Activated CD4-positive, alpha-beta T cell treated with anti-CD3 and anti-CD28 coated beads, Interleukin-2, amount 10 ng/mL, durations not matched to agents 24 days and 14 days (primary cell): ENCODE measurements at regions of chr6 and their contacts with region 1.

Region 1: DNA sequence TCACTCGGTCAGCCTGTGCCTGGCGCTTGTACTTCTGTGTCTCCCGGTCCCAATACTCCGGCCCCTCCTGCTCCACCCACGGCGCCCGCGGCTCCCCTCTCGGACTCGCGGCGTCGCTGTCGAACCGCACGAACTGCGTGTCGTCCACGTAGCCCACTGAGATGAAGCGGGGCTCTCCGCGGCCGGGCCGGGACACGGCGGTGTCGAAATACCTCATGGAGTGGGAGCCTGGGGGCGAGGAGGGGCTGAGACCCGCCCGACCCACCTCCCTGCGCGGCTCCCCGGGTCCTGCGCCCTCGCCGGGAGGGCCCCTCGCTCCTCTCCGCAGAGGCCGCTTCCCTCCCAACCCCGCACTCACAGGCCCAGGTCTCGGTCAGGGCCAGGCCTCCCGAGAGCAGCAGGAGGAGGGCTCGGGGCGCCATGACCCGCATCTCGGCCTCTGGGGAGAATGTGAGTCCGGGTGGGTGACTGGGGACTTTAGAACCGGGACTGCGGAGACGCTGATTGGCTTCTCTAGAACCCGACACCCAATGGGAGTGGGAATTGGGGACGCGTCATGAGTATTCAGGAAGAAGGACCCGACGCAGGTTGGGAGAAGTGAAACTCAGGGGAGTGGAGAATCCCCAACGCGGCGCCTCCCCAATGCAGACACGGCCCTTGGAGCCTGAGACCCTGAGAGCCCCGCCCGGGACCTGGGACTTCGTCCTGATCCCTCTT is at the start of gene HLA-C:
- DNase-seq: peak; percentile 97
- H3K4me3 Mint-ChIP-seq: peak within 1 kb of the TSS; percentile 98
- H3K27ac Mint-ChIP-seq: peak within 1 kb of the TSS; percentile 100
- H3K4me1 Mint-ChIP-seq: peaks cover 51% of the 10 kb centered on the region
- H3K27me3 Mint-ChIP-seq: peaks cover 9% of the 10 kb centered on the region
- total RNA-seq, gene HLA-C: 857 and 893 TPM in 2 replicates

Region 2: DNA sequence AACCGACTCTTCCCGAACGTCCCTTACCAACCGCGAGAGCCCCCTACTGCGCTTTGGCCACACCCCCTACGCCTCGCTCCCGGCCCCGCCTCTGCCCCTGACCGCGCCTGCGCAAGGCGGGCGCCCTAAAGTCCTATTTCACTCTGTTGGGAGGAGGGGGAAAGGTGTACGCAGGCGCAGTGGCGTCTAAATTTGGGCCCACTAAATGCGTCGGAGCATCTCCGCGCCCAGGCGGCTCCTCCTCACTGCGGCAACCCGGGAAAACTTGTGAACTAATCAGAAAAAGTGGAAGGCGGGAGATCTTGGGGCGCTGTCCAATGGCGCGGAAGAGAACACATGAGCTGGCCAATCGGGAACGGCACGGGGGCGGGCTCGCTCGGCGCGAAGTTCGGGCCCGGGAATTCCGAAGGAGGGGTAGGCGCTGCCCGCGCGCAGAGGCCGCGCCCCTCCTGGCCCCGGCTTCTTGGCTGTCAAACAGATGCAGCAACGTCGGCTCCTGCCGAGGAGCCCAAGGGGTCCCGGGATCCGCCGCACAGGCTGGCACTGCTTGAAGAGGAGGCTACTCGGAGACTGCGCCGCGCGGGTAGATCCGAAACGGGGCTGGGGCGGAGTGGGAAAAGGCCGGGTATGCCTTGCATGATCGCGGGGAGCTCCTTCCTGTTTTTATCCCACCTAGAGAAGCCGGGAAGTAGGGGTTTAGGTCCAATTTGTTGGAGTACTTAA is 113.5 kb before region 1 on chr6 and contains the start of gene TCF19:
- intact Hi-C with region 1: loop called (anchors 2 kb)
- DNase-seq: peak; percentile 100
- H3K4me3 Mint-ChIP-seq: peak within 1 kb of the TSS; percentile 97
- H3K27ac Mint-ChIP-seq: peak within 1 kb of the TSS; percentile 89
- H3K4me1 Mint-ChIP-seq: peaks cover 41% of the 10 kb centered on the region
- H3K27me3 Mint-ChIP-seq: peaks cover 3% of the 10 kb centered on the region
- total RNA-seq, gene TCF19: 79.5 and 82.6 TPM in 2 replicates

Region 3: DNA sequence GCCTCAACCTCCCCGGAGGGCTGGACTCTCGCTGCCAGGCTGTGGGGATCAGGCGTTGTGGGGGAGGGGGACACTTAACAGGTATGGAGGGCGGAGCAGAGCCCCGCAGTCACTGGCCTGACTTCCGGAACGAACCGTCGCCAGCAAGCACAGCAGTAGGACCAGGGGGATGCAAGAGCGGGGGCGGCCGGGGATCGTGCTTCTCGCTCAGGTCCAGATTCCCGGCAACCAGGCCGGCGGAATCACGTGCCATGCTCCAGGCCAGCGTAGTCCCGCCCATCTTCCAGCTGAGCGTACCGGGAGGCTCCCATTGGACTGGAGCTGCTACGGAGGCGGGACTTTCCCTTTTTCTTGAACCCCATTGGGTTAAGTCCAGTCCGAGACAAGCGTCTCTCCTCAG is 91.3 kb before region 1 on chr6:
- intact Hi-C with region 1: no loop called
- DNase-seq: peak; percentile 81
- H3K4me3 Mint-ChIP-seq: peak overlapping the region; percentile 69
- H3K27ac Mint-ChIP-seq: no peak overlapping the region
- H3K4me1 Mint-ChIP-seq: peaks cover 13% of the 10 kb centered on the region
- H3K27me3 Mint-ChIP-seq: no peaks in the 10 kb centered on the region

Region 4: GRCh38 chr6:31203345-31203979 is 68.3 kb before region 1 on chr6:
- intact Hi-C with region 1: loop called (anchors 1 kb)
- DNase-seq: peak; percentile 86
- H3K4me3 Mint-ChIP-seq: peak overlapping the region; percentile 93
- H3K27ac Mint-ChIP-seq: peak overlapping the region; percentile 98
- H3K4me1 Mint-ChIP-seq: peaks cover 47% of the 10 kb centered on the region
- H3K27me3 Mint-ChIP-seq: no peaks in the 10 kb centered on the region

Region 5: GRCh38 chr6:31356946-31357466 is 85.2 kb after region 1 on chr6 and contains the start of gene HLA-B:
- intact Hi-C with region 1: loop called (anchors 1 kb)
- DNase-seq: peak; percentile 91
- H3K4me3 Mint-ChIP-seq: peak within 1 kb of the TSS; percentile 95
- H3K27ac Mint-ChIP-seq: peak within 1 kb of the TSS; percentile 99
- H3K4me1 Mint-ChIP-seq: peaks cover 52% of the 10 kb centered on the region
- H3K27me3 Mint-ChIP-seq: peaks cover 8% of the 10 kb centered on the region
- total RNA-seq, gene HLA-B: 3,406 and 3,483 TPM in 2 replicates

Region 6: GRCh38 chr6:31366693-31367470 is 95.1 kb after region 1 on chr6:
- intact Hi-C with region 1: loop called (anchors 1 kb)
- DNase-seq: peak; percentile 96
- H3K4me3 Mint-ChIP-seq: peak overlapping the region; percentile 79
- H3K27ac Mint-ChIP-seq: peak overlapping the region; percentile 42
- H3K4me1 Mint-ChIP-seq: peaks cover 13% of the 10 kb centered on the region
- H3K27me3 Mint-ChIP-seq: peaks cover 58% of the 10 kb centered on the region